Activated CD4-positive, alpha-beta T cell treated with anti-CD3 and anti-CD28 coated beads, Interleukin-2, amount 10 ng/mL, durations not matched to agents 24 days and 14 days (primary cell): ENCODE measurements at regions of chr6 and their contacts with region 1.

Region 1: GRCh38 chr6:157946865-157947532 is 34.7 kb upstream of the SYNJ2 start:
- DNase-seq: peak; percentile 68
- H3K4me3 Mint-ChIP-seq: no peak overlapping the region
- H3K27ac Mint-ChIP-seq: no peak overlapping the region
- H3K4me1 Mint-ChIP-seq: peaks cover 21% of the 10 kb centered on the region
- H3K27me3 Mint-ChIP-seq: peaks cover 11% of the 10 kb centered on the region

Region 2: DNA sequence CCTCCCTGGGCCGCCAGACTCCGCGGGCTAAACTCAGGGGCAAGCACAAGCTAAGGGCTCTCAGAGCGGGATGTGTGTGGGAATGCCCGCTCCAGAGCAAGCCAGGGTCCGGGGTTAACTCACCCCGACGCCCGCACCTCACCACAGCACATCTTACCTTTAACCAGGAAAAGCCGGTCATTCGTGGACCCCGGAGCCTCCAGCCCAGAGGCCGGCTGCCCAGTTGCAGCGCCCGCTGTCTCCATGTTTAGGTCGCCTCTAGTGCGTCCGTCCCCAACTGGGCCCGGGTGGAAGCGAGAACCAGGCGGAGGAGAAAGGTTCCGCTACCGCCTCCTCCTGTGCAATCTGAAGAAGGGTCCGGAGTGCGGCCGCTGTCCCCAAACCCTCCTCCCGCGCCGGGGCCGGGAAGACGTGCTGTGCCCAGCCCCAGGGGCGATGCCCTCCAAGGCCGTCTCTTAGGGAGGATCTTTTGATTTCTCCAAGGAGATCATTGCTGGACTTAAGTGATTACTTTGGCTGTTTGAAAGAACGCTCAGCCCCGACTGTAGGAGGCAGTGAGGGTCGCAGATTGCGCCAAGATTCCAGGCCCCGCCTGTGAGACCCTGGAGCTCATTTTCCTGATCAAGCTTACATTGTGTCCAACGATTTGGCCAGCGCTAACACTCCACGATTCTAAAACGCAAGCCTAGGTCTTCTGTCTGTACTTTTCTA is 623.6 kb before region 1 on chr6 and contains the start of gene TMEM242:
- intact Hi-C with region 1: loop called (anchors 10 kb)
- DNase-seq: peak; percentile 97
- H3K4me3 Mint-ChIP-seq: peak within 1 kb of the TSS; percentile 94
- H3K27ac Mint-ChIP-seq: peak within 1 kb of the TSS; percentile 92
- H3K4me1 Mint-ChIP-seq: peaks cover 39% of the 10 kb centered on the region
- H3K27me3 Mint-ChIP-seq: peaks cover 21% of the 10 kb centered on the region
- total RNA-seq, gene TMEM242: 10.1 and 10.7 TPM in 2 replicates

Region 3: DNA sequence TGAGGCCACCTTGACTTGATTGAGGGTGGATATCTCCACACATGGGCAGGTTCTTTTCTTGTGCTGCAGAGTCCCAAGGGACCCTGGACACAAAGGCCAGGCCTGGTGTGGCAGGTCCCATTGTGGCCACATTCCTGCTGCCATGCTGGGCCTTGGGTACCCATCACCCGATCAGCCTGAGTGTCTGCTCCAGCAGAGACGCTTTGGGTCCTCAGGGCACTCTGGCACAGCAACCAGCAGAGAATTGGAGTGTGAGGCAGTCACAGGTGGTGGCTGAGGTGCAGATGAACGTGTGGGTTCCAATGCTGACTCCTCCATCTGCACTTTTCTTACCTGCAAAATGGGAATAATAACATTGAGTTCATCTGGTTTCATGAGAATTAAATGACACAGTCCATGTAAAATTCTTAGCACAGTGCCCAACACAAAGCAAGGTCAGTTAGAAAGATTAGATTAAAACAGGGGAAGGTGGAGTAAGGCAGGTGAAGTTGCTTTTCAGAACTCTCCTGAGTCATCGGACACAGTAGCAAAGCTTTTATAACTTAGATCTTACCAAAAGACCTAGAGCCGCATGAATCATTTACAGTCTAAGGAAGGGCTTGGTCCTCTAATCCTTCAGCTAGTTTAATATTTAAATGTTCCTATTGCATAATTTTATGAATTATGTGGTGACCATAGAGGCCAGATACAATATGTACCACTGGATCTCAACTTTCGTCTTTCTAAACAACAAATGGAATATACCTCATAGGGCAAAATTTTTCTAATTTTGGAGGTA is 326.2 kb before region 1 on chr6:
- intact Hi-C with region 1: no loop called
- DNase-seq: no peak
- H3K4me3 Mint-ChIP-seq: no peak overlapping the region
- H3K27ac Mint-ChIP-seq: no peak overlapping the region
- H3K4me1 Mint-ChIP-seq: no peaks in the 10 kb centered on the region
- H3K27me3 Mint-ChIP-seq: no peaks in the 10 kb centered on the region

Region 4: GRCh38 chr6:157830354-157831017 is 116.5 kb before region 1 on chr6:
- intact Hi-C with region 1: loop called (anchors 5 kb)
- DNase-seq: peak; percentile 53
- H3K4me3 Mint-ChIP-seq: no peak overlapping the region
- H3K27ac Mint-ChIP-seq: peak overlapping the region; percentile 15
- H3K4me1 Mint-ChIP-seq: peaks cover 44% of the 10 kb centered on the region
- H3K27me3 Mint-ChIP-seq: peaks cover 2% of the 10 kb centered on the region

Region 5: GRCh38 chr6:157885211-157885788 is 61.7 kb before region 1 on chr6:
- intact Hi-C with region 1: loop called (anchors 5 kb)
- DNase-seq: peak; percentile 88
- H3K4me3 Mint-ChIP-seq: peak overlapping the region; percentile 28
- H3K27ac Mint-ChIP-seq: peak overlapping the region; percentile 83
- H3K4me1 Mint-ChIP-seq: peaks cover 41% of the 10 kb centered on the region
- H3K27me3 Mint-ChIP-seq: no peaks in the 10 kb centered on the region

Region 6: GRCh38 chr6:157962601-157963302 is 15.8 kb after region 1 on chr6:
- intact Hi-C with region 1: loop called (anchors 1 kb)
- DNase-seq: peak; percentile 80
- H3K4me3 Mint-ChIP-seq: peak overlapping the region; percentile 80
- H3K27ac Mint-ChIP-seq: peak overlapping the region; percentile 95
- H3K4me1 Mint-ChIP-seq: peaks cover 29% of the 10 kb centered on the region
- H3K27me3 Mint-ChIP-seq: no peaks in the 10 kb centered on the region